ENCODE measurements at regions of chr2 and their contacts with region 1.

Region 1: GRCh38 chr2:60550178-60550983 is 3.1 kb downstream of the BCL11A start:
- DNase-seq: no peak
- ATAC-seq: peak; percentile 71
- H3K4me3 ChIP-seq: peak overlapping the region; percentile 56 to 68
- H3K27ac ChIP-seq: no peak overlapping the region
- H3K4me1 ChIP-seq: peaks cover 11% of the 10 kb centered on the region
- H3K27me3 ChIP-seq: peaks cover 37% of the 10 kb centered on the region
- CTCF ChIP-seq: peak; percentile 88

Region 2: GRCh38 chr2:59296279-59296678 is 1254.1 kb before region 1 on chr2:
- CTCF ChIA-PET with region 1: no interaction called
- POLR2A ChIA-PET with region 1: no interaction called
- in situ Hi-C with region 1: no loop called
- intact Hi-C with region 1: loop called (anchors 10 kb)
- DNase-seq: no peak
- ATAC-seq: no peak
- H3K4me3 ChIP-seq: no peak overlapping the region
- H3K27ac ChIP-seq: no peak overlapping the region
- H3K4me1 ChIP-seq: no peaks in the 10 kb centered on the region
- H3K27me3 ChIP-seq: no peaks in the 10 kb centered on the region
- CTCF ChIP-seq: no peak

Region 3: DNA sequence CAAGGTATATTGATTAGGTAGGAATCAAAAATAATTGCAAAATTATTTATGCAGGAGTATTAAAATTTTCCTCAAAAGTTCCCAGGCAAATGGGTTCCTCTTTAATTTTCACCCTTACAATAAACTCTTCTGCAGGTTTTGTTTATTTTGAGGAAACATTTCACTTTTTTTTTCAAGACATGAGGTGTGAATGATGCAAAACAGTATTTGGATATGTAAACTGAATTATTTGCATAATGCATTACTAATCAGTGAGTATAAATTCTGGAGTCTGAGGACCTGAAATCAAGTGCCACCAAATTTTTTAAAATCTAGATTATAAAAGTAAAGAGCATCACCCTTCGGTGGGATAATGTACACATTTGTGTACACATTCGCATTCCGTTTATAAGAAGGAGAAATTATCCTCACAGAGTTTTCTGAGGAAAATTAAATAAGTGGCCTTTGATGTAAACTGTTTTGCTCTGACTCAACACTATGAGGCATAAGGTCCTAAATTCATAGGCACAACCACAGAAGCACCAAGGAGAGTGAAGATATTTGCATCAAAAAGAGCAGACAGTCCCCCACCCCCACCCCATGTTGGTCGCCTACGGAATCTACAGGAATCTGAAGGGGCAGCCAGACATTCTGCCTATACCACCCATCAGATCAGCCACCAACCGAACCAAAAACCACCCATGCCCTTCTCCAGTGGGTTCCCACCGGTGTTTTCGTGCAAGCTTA is 30.1 kb before region 1 on chr2:
- CTCF ChIA-PET with region 1: interaction called, 12 read pairs
- POLR2A ChIA-PET with region 1: no interaction called
- in situ Hi-C with region 1: no loop called
- intact Hi-C with region 1: no loop called
- DNase-seq: no peak
- ATAC-seq: no peak
- H3K4me3 ChIP-seq: no peak overlapping the region
- H3K27ac ChIP-seq: no peak overlapping the region
- H3K4me1 ChIP-seq: no peaks in the 10 kb centered on the region
- H3K27me3 ChIP-seq: peaks cover 14% of the 10 kb centered on the region; the same call in 1 of the 2 replicates
- CTCF ChIP-seq: no peak

Measured in Panc1 (cell line).